Activated CD4-positive, alpha-beta memory T cell treated with anti-CD3 and anti-CD28 coated beads for 36 hours (primary cell): ENCODE measurements at regions of chr2 and their contacts with region 1.

Region 1: GRCh38 chr2:46915811-46916630 is 415 bp upstream of the MCFD2 start:
- DNase-seq: peak; percentile 85
- H3K4me3 Mint-ChIP-seq: peak overlapping the region; percentile 85
- H3K27ac Mint-ChIP-seq: peak overlapping the region; percentile 80
- H3K4me1 Mint-ChIP-seq: peaks cover 46% of the 10 kb centered on the region
- H3K27me3 Mint-ChIP-seq: no peaks in the 10 kb centered on the region

Region 2: DNA sequence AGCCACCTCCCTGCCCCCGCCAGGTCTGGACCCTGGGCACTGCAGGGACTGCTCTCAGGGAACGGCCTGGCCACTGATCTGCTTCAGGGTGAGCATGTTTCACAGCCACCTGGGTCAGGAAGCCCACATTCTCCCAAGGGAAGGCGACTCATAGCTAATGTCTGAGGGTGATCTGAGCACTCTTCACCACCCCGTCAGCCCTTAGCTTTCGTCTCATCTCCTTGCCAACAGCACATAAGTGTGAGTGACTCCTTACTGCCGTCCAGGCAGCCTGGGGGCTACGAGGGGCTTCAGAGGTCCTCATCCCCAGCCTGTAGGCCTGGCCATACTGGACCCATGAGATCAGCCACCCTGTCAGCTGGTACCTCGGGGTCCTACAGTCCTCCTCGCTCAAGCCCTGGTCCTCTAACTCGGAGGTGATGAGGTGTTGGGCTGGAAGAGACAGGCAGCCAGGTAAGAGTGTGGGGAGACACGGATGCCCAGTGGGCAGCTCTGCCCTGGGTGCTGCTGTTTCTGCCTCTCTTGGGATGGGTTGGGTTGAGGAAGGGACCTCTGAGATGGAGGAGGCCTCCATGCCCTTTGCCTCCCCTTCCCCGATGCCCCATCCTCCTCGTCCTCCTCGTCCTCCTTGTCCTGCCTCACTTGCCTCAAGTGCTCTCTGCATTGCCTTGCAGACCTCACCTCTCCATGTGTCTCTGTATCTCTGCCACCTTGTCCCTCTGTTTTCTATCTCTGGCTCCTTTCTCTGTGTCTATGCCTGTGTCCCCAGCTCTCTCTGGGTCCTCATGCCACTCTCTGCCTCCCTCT is 88.2 kb before region 1 on chr2:
- CTCF ChIA-PET with region 1: no interaction called
- POLR2A ChIA-PET with region 1: no interaction called
- intact Hi-C with region 1: no loop called
- DNase-seq: no peak
- H3K4me3 Mint-ChIP-seq: no peak overlapping the region
- H3K27ac Mint-ChIP-seq: no peak overlapping the region
- H3K4me1 Mint-ChIP-seq: no peaks in the 10 kb centered on the region
- H3K27me3 Mint-ChIP-seq: peaks cover 13% of the 10 kb centered on the region

Region 3: DNA sequence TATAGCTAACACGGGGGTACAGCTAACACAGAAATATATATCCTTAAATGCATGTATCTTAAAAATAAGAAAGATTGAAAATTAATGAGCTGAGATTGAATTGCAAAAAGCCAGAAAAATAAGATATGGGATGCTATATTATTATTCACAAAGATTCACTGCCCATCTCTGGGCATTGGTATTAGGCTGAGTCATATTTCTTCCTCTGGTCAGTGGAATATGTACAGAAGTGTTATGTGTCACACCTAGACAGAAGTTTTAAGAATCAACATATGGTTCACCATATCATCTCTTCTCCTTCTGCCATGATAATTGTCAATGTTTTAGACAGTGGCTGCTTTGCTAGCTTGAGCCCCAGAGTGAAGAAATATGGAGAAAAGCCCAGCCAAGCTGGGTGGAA is 13.6 kb after region 1 on chr2:
- CTCF ChIA-PET with region 1: interaction called, 26 read pairs
- POLR2A ChIA-PET with region 1: no interaction called
- intact Hi-C with region 1: no loop called
- DNase-seq: no peak
- H3K4me3 Mint-ChIP-seq: no peak overlapping the region
- H3K27ac Mint-ChIP-seq: no peak overlapping the region
- H3K4me1 Mint-ChIP-seq: peaks cover 7% of the 10 kb centered on the region
- H3K27me3 Mint-ChIP-seq: no peaks in the 10 kb centered on the region

Region 4: DNA sequence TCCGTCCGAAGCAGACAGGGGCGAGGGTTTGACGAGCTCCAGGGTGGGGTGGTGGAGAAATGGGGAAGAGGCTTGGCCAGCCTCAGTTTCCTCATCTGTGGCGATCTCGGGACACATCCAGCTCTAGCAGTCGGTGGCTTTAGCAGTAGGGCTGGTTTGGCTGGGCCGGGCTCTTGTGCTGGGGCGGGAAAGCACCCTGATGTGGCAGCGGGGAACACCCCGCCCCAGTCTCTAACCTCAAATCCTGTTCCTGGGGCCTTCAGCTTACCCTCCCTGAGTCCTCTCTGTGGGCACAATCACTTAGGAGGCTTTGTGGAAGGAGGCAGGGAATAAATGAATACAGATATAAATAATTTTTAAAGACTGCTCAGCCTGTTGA is 26.1 kb after region 1 on chr2:
- CTCF ChIA-PET with region 1: no interaction called
- POLR2A ChIA-PET with region 1: interaction called, 3 read pairs
- intact Hi-C with region 1: loop called (anchors 1 kb)
- DNase-seq: peak; percentile 85
- H3K4me3 Mint-ChIP-seq: peak overlapping the region; percentile 99
- H3K27ac Mint-ChIP-seq: peak overlapping the region; percentile 100
- H3K4me1 Mint-ChIP-seq: peaks cover 46% of the 10 kb centered on the region
- H3K27me3 Mint-ChIP-seq: no peaks in the 10 kb centered on the region

Region 5: GRCh38 chr2:46984642-46985476 is 68.8 kb after region 1 on chr2:
- CTCF ChIA-PET with region 1: interaction called, 6 read pairs
- POLR2A ChIA-PET with region 1: interaction called, 3 read pairs
- intact Hi-C with region 1: loop called (anchors 1 kb)
- DNase-seq: peak; percentile 84
- H3K4me3 Mint-ChIP-seq: peak overlapping the region; percentile 57
- H3K27ac Mint-ChIP-seq: peak overlapping the region; percentile 97
- H3K4me1 Mint-ChIP-seq: peaks cover 59% of the 10 kb centered on the region
- H3K27me3 Mint-ChIP-seq: no peaks in the 10 kb centered on the region

Region 6: DNA sequence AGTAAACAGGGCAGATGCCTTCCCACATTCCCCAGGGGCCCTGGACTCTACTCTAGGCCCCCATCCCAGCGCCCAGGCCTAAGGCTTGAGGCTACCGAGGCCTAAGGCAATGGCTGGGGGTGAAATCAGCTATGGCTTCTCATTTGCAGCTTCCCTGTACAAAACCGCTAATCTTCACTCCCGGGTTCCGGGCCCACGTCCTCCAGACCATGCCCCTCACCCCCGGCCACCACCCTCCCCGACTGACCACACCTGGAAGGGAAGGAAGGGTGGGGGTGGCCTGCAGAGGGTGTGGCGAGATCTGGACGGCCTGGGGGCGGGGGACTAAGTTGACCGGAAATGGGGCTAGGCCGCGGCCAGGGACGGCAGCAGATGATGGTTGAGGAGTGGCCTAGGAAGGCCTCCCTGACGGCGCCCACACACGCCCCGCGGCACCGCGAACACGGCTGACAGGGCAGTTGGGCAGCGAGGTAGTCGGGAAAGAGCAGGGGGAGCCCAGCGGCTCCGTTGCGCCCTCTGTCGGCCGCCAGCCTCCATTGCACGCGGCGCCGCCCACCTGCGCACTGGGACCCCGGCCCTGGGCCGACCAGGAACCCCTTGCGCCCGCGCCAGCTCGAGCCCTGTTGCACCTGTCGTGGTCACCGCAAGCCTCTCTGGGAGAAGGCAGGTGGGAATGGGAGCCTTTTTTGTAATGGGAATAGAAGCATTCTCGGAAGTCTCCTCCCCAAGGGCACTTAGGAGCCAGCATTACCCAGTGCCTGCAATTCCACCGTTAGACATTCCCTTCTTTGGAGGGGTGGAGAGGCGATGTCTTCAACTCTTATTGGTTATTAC is 356.2 kb after region 1 on chr2:
- CTCF ChIA-PET with region 1: no interaction called
- POLR2A ChIA-PET with region 1: no interaction called
- intact Hi-C with region 1: loop called (anchors 5 kb)
- DNase-seq: peak; percentile 72
- H3K4me3 Mint-ChIP-seq: peak overlapping the region; percentile 63
- H3K27ac Mint-ChIP-seq: no peak overlapping the region
- H3K4me1 Mint-ChIP-seq: no peaks in the 10 kb centered on the region
- H3K27me3 Mint-ChIP-seq: no peaks in the 10 kb centered on the region